Activated B cell treated with CpG ODN at 0.5 μM for 24 hours (primary cell): ENCODE measurements at regions of chr2 and their contacts with region 1.

Region 1: GRCh38 chr2:230987137-230988020 is 8.5 kb upstream of the SPATA3 start:
- DNase-seq: peak; percentile 80
- ATAC-seq: peak; percentile 75
- H3K4me3 Mint-ChIP-seq: peak overlapping the region; percentile 75
- H3K27ac Mint-ChIP-seq: no peak overlapping the region
- H3K4me1 Mint-ChIP-seq: peaks cover 18% of the 10 kb centered on the region
- H3K27me3 Mint-ChIP-seq: peaks cover 17% of the 10 kb centered on the region
- CTCF ChIP-seq: peak; percentile 61

Region 2: DNA sequence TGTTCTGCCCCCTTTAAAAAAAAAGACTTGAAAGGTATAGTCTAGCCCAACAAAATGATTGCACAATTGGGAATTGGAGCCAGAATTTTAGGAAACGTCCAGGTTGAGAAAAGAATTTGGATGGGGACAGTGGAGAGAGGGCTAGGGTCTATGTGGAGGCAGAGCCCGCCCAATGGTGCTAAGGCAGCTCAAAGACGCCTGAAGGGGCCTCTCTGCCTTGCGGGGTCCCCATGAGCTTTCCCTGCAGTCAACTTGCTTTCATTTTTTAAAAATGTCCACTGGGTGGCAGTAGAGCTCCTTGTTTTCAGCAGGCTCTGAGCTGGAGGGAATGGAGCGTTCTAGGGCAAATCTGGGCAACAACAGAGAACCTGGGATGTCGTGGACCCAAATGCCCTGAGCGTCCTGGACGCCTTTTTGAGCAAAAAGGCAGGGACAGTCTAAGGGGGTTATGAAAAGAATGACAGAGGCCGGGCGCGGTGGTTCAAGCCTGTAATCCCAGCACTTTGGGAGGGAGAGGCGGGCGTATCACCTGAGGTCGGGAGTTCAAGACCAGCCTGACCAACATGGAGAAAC is 162.9 kb before region 1 on chr2:
- CTCF ChIA-PET with region 1: interaction called, 150 read pairs
- POLR2A ChIA-PET with region 1: interaction called, 4 read pairs
- intact Hi-C with region 1: loop called (anchors 1 kb)
- DNase-seq: no peak
- ATAC-seq: peak; percentile 77
- H3K4me3 Mint-ChIP-seq: peak overlapping the region; percentile 38
- H3K27ac Mint-ChIP-seq: peak overlapping the region; percentile 1
- H3K4me1 Mint-ChIP-seq: peaks cover 9% of the 10 kb centered on the region
- H3K27me3 Mint-ChIP-seq: peaks cover 29% of the 10 kb centered on the region
- CTCF ChIP-seq: no peak

Region 3: GRCh38 chr2:230902180-230902899 is 85.0 kb before region 1 on chr2:
- CTCF ChIA-PET with region 1: interaction called, 97 read pairs
- POLR2A ChIA-PET with region 1: interaction called, 6 read pairs
- intact Hi-C with region 1: loop called (anchors 1 kb)
- DNase-seq: peak; percentile 19
- ATAC-seq: peak; percentile 90
- H3K4me3 Mint-ChIP-seq: no peak overlapping the region
- H3K27ac Mint-ChIP-seq: no peak overlapping the region
- H3K4me1 Mint-ChIP-seq: peaks cover 18% of the 10 kb centered on the region
- H3K27me3 Mint-ChIP-seq: no peaks in the 10 kb centered on the region
- CTCF ChIP-seq: no peak

Region 4: DNA sequence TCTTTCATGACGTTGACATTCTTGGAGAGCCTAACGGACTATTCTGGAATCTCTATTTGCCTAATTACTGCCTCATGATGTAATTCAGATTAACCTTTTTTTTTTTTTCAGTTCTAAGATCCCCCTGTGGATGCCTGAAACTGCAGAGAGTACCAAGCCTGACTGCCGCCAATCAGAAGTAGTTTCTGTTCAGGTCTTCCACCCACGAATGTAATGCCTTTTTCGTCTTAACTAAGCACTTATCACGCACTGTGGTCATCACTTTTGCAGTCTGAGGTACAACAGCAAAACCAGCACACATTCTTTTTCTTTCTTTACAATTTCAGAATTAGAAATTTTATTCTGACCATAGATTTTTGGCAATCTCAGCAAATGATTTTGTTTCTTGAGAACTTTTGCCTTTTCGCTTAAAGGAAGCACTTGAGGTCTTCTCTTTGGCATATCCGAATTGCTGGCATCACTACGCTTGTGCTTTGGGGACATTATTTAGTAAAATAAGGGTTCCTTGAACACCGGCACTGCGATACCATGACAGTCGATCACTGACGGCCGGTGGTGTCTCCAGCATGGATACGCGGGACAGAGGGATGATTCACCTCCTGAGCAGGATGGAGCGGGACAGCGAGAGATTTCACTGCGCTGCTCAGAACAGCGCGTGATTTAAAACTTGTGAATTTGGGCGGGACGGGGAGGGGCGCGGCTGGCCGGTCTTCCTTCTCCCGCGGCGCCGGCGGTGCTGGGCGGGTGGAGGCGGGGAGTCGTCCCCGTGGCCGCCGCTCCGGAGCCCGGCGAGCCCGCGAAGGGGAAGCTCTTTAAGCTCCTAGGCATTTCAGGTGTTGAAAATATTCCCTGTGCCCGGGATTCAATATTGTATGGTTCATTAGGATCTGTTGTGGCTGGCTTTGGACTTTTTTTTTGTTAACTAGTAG is 30.3 kb before region 1 on chr2:
- CTCF ChIA-PET with region 1: no interaction called
- POLR2A ChIA-PET with region 1: interaction called, 6 read pairs
- intact Hi-C with region 1: loop called (anchors 2 kb)
- DNase-seq: no peak
- ATAC-seq: peak; percentile 83
- H3K4me3 Mint-ChIP-seq: peak overlapping the region; percentile 87
- H3K27ac Mint-ChIP-seq: peak overlapping the region; percentile 80
- H3K4me1 Mint-ChIP-seq: peaks cover 18% of the 10 kb centered on the region
- H3K27me3 Mint-ChIP-seq: peaks cover 29% of the 10 kb centered on the region
- CTCF ChIP-seq: no peak

Region 5: DNA sequence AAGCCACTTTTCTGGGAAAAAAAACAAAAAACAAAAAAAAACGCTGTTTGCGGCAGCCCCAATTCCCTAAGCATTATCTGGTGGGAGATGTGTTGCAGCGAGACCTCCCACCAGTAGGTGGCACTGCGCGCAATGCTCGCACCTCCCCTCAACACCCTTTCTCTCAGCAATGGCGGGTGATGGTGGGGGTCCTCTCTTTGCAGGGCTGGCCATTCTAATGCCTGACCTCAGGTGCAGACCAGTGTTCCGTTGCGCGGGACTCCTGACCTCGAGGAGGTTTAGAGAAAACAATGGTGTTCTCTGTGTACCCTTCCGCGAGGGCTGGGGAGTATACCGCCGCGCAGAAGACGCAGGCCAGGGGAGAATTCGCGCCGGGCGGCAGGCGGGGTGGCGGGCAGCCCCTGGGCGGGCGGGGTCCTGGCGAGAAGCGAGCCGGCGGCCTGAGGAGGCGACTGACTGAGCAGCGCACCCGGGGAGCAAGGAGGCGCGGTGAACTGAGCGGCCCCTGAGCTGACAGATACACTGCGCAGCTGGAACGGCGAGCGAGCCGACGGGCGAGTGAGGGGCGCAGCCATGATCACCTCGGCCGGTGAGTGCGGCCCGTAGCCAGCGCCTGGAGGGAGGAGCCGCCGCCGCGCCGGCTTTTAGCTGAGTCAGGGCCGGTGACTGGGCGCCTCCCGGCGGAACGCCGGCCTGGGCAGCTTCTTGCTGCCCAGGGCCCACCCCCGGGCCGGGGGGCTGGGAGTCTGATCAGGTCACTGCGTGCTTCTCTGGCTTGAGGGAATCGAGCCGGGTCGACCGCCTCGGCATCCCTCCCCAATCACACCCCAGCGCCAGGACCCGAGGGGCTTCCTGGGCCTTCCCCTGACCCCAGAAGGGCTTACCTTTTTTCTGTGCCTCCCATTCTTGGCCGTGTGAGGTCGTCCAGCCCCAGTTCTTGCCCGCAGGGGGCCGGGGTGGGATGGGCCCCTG is 69.4 kb after region 1 on chr2 and contains the start of gene PSMD1:
- CTCF ChIA-PET with region 1: interaction called, 5 read pairs
- POLR2A ChIA-PET with region 1: no interaction called
- intact Hi-C with region 1: loop called (anchors 2 kb)
- DNase-seq: peak; percentile 90
- ATAC-seq: peak; percentile 85
- H3K4me3 Mint-ChIP-seq: peak within 1 kb of the TSS; percentile 98
- H3K27ac Mint-ChIP-seq: peak within 1 kb of the TSS; percentile 100
- H3K4me1 Mint-ChIP-seq: peaks cover 43% of the 10 kb centered on the region
- H3K27me3 Mint-ChIP-seq: peaks cover 3% of the 10 kb centered on the region
- CTCF ChIP-seq: peak; percentile 65
- total RNA-seq, gene PSMD1: 99.9 and 105 TPM in 2 replicates